Tibial artery (tissue), 4 donors: ENCODE measurements at regions of chr7 and their contacts with region 1.

Region 1: DNA sequence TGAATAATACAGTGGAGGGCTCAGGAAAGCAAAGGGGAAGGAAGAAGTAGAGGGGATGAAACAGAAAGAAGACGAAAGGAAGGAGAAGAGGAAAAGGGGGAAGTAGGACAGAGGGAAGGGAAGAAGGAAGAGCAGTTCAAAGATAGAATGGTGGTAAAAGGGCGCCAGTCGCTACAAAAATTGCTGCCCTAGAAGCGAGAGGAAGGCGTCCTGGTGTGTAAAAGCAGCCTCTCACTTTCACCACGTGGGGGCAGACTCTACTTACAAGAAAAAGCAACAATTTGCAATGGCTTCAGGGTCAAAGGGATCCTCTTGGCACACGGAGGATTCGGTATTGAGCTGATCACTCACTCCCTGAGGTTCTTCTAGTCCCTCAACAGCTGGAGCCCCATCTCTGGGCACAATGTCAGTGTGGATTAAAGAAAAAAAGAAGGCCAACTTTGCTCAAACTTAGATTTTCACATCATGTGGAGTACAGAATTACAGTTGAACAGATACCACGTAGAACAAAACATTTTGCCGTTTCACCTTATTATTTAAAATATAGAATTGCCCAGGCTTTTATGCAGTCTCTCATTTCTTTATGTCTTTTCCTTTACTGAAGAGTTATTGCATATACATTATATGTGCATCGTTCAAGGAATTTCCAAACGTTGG is 31.4 kb upstream of the NPVF start:
- DNase-seq: peak; percentile 66 to 76
- H3K4me3 ChIP-seq: no peak overlapping the region
- H3K27ac ChIP-seq: no peak overlapping the region
- H3K4me1 ChIP-seq: no peaks in the 10 kb centered on the region
- H3K27me3 ChIP-seq: no peaks in the 10 kb centered on the region
- CTCF ChIP-seq: peak; percentile 75 to 80

Region 2: GRCh38 chr7:25565949-25566348 is 306.2 kb after region 1 on chr7:
- intact Hi-C with region 1: loop called (anchors 5 kb)
- DNase-seq: peak; percentile 58 to 75
- H3K4me3 ChIP-seq: peak overlapping the region in 1 of 2 donors; percentile 17
- H3K27ac ChIP-seq: peak overlapping the region; percentile 72 to 74
- H3K4me1 ChIP-seq: peaks cover 0 to 41% (median 20%) of the 10 kb centered on the region in 4 donors
- H3K27me3 ChIP-seq: no peaks in the 10 kb centered on the region
- CTCF ChIP-seq: peak; percentile 100